MCF 10A (cell line): ENCODE measurements at regions of chr19 and their contacts with region 1.

Region 1: GRCh38 chr19:46840136-46840942 is 10.3 kb downstream of the AP2S1 start:
- DNase-seq: peak; percentile 71
- H3K4me3 Mint-ChIP-seq: no peak overlapping the region
- H3K27ac Mint-ChIP-seq: no peak overlapping the region
- H3K4me1 Mint-ChIP-seq: peaks cover 18% of the 10 kb centered on the region
- H3K27me3 Mint-ChIP-seq: no peaks in the 10 kb centered on the region
- CTCF ChIP-seq: peak; percentile 79

Region 2: DNA sequence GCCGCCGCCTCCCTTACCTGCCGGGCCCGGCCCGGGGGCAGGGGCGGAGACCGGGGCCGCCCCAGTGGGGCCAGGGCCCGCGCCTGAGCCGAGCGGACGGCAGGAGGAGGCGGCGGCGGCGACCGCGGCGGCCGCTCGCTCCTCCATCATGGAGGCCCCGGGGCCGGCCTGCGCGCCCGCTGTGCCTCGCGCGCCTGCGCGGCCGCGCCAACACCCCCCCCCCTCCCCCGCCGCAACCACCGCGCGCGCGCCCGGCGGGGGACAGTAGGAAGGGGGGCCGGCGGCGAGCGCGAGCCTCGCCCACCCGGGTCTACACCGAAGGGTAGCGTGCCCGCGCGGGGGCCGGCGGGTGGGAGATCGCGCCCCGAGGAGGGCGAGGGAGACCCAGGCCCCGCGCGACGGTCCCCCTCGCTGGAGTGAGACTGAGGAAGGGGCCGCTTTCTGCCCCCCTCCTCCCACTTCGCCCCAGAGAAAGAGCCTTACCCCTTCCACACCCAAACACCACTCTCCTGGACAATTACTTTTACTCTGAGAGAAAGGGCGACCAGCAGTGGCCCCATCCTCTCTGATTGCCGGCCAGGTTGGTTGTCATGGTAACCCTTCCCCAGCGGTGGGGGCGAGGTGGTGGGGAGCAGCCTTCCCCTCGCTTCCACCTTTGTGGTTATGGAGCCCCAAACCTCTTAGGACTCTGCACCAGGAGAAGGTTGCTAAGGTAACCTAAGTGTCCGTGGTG is 93.9 kb before region 1 on chr19 and contains the start of gene STRN4:
- CTCF ChIA-PET with region 1: interaction called, 103 read pairs
- POLR2A ChIA-PET with region 1: interaction called, 3 read pairs
- intact Hi-C with region 1: no loop called
- DNase-seq: no peak
- H3K4me3 Mint-ChIP-seq: peak within 1 kb of the TSS; percentile 97
- H3K27ac Mint-ChIP-seq: peak within 1 kb of the TSS; percentile 88
- H3K4me1 Mint-ChIP-seq: peaks cover 19% of the 10 kb centered on the region
- H3K27me3 Mint-ChIP-seq: no peaks in the 10 kb centered on the region
- CTCF ChIP-seq: no peak
- total RNA-seq, gene STRN4: 90.1 and 92.3 TPM in 2 replicates

Region 3: DNA sequence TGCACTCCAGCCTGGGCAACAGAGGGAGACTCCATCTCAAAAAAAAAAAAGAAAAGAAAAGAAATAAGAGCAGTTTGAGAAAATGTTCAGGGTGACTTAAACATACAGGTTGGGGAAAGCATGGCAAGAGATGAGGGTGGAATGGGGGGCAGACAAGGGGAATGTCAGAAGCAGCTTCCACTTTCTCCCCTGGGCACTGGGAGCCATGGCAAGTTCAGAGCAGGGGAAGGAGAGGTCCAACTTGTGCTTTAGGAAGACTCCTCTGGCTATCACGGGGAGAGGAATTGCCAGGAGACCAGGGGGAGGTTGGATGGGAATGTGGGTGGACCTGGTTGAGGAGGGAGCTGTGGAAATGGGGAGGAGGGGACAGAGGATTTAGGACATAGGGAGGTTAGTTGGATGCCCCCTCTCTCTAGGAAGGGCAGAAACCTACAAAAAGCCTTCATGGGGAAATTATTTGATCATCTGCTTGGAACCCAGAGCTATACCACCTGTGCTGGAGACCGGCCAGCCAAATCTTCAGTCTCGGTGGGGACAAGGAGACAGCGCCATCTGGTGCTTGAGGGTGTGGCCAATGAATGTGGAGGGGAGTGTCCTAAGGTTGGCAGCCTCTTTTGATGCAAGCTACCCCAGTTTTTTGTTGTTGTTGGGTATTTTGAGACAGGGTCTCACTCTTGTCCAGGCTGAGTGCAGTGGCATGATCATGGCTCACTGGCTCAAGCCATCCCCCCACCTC is 86.8 kb before region 1 on chr19:
- CTCF ChIA-PET with region 1: interaction called, 133 read pairs
- POLR2A ChIA-PET with region 1: interaction called, 19 read pairs
- intact Hi-C with region 1: loop called (anchors 1 kb)
- DNase-seq: peak; percentile 69
- H3K4me3 Mint-ChIP-seq: no peak overlapping the region
- H3K27ac Mint-ChIP-seq: no peak overlapping the region
- H3K4me1 Mint-ChIP-seq: peaks cover 11% of the 10 kb centered on the region
- H3K27me3 Mint-ChIP-seq: no peaks in the 10 kb centered on the region
- CTCF ChIP-seq: no peak

Region 4: GRCh38 chr19:46759817-46760333 is 80.5 kb before region 1 on chr19:
- CTCF ChIA-PET with region 1: interaction called, 133 read pairs
- POLR2A ChIA-PET with region 1: interaction called, 19 read pairs
- intact Hi-C with region 1: loop called (anchors 1 kb)
- DNase-seq: peak; percentile 68
- H3K4me3 Mint-ChIP-seq: no peak overlapping the region
- H3K27ac Mint-ChIP-seq: no peak overlapping the region
- H3K4me1 Mint-ChIP-seq: peaks cover 12% of the 10 kb centered on the region
- H3K27me3 Mint-ChIP-seq: no peaks in the 10 kb centered on the region
- CTCF ChIP-seq: no peak

Region 5: GRCh38 chr19:46806656-46807055 is 33.7 kb before region 1 on chr19:
- CTCF ChIA-PET with region 1: interaction called, 13 read pairs
- POLR2A ChIA-PET with region 1: no interaction called
- intact Hi-C with region 1: no loop called
- DNase-seq: no peak
- H3K4me3 Mint-ChIP-seq: no peak overlapping the region
- H3K27ac Mint-ChIP-seq: no peak overlapping the region
- H3K4me1 Mint-ChIP-seq: no peaks in the 10 kb centered on the region
- H3K27me3 Mint-ChIP-seq: no peaks in the 10 kb centered on the region
- CTCF ChIP-seq: no peak